ENCODE measurements at regions of chr1 and their contacts with region 1.

Region 1: GRCh38 chr1:157369808-157370521 is 182.3 kb downstream of the FCRL5 start:
- DNase-seq: peak; percentile 80
- H3K4me3 Mint-ChIP-seq: no peak overlapping the region
- H3K27ac Mint-ChIP-seq: no peak overlapping the region
- H3K4me1 Mint-ChIP-seq: peaks cover 4% of the 10 kb centered on the region
- H3K27me3 Mint-ChIP-seq: peaks cover 16% of the 10 kb centered on the region
- CTCF ChIP-seq: peak; percentile 99

Region 2: DNA sequence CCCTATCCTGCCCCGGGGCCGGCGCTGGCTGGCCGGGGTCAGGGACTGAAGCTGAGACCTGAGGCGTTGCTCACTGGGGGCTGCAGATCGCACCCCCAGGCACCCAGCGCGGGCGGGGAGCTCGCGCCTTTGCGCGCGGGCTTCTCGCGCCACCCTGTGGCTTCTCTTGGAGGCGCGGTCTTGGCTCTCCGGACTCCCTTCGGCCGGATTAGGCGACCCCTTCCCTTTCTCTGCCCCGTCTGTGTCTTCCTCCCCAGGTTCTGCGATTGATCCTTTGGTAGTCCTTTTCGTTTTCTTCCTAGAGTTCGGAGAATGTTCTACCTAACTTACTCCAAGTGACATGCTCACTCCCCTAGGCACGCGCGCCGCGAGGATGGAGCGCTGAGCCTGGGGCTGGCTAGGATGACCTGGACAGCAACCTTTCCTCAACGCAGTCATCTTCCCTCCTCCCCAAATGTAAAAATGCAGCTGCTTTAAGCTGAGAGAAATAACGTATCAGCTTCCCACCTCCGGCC is 509.8 kb before region 1 on chr1:
- CTCF ChIA-PET with region 1: no interaction called
- POLR2A ChIA-PET with region 1: no interaction called
- intact Hi-C with region 1: no loop called
- DNase-seq: peak; percentile 60
- H3K4me3 Mint-ChIP-seq: peak overlapping the region; percentile 57
- H3K27ac Mint-ChIP-seq: no peak overlapping the region
- H3K4me1 Mint-ChIP-seq: peaks cover 18% of the 10 kb centered on the region
- H3K27me3 Mint-ChIP-seq: peaks cover 53% of the 10 kb centered on the region
- CTCF ChIP-seq: peak; percentile 98

Region 3: DNA sequence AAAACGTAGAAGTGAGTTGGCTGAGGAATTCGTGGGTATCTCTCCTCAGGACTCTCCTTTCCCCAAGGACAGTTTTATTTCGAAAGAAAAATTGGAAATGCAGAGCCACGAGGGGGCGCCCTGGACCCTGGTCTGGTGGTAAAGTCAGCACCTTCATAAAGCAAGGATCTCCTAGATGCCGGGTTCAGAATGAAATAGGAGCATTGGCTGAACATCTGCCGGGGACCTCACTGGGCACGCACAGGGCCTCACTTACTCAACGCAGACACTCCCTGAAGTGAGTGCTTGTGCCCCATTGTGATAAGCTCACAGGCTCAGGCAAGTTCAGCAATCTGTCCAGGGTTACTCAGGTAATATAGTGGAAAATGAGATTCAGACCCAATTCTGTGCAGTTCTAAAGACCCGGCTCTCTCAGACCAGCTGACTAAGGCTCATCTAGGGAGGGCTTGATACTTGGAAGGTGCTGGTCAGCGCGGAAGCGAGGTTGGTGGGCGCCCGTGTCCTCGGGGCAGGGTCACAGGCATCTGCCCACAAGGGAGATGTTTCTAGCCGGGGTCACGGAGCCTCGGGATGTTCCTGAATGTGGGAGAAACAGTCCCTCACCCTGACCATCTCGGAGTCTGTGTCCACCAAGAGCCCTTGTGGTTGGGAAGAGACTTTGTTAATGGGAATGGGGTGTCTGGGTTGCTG is 176.1 kb before region 1 on chr1:
- CTCF ChIA-PET with region 1: interaction called, 15 read pairs
- POLR2A ChIA-PET with region 1: no interaction called
- intact Hi-C with region 1: loop called (anchors 5 kb)
- DNase-seq: peak; percentile 77
- H3K4me3 Mint-ChIP-seq: no peak overlapping the region
- H3K27ac Mint-ChIP-seq: no peak overlapping the region
- H3K4me1 Mint-ChIP-seq: peaks cover 6% of the 10 kb centered on the region
- H3K27me3 Mint-ChIP-seq: peaks cover 32% of the 10 kb centered on the region
- CTCF ChIP-seq: peak; percentile 83

Region 4: DNA sequence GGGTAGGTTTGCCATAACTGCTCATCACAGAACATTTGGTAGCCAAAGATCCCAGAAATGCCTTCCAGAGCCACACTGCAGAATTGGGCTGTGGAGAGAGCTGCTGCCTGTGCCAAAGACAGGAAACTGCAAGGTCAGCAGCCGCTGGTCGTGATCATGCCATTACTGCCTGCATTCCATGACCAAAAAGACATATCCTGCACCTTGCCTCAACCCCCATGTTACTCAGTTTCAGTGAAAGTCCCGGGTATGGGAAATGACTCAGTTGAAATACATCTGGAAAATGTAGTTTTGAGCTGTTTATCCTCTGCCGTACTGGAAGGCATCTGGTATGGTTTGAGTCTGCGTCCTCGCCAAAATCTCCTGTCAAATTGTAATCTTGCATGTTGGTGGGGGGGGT is 20.7 kb after region 1 on chr1:
- CTCF ChIA-PET with region 1: interaction called, 14 read pairs
- POLR2A ChIA-PET with region 1: no interaction called
- intact Hi-C with region 1: no loop called
- DNase-seq: peak; percentile 73
- H3K4me3 Mint-ChIP-seq: peak overlapping the region; percentile 13
- H3K27ac Mint-ChIP-seq: peak overlapping the region; percentile 36
- H3K4me1 Mint-ChIP-seq: peaks cover 19% of the 10 kb centered on the region
- H3K27me3 Mint-ChIP-seq: no peaks in the 10 kb centered on the region
- CTCF ChIP-seq: no peak

Region 5: DNA sequence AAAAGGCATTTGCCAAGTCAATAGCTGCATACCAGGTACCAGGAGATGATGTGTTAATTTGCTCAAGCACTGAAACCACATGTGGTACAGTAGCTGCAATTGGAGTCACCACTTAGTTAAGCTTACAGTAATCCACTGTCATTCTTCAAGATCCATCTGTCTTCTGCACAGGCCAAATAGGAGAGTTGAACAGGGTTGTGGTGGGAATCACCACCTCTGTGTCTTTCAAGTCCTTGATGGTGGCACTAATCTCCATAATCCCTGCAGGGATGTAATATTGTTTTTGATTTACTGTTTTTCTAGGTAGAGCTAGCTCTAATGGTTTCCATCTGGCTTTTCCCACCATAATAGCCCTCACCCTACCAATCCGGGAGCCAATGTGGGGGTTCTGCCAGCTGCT is 90.4 kb after region 1 on chr1:
- CTCF ChIA-PET with region 1: interaction called, 10 read pairs
- POLR2A ChIA-PET with region 1: no interaction called
- intact Hi-C with region 1: no loop called
- DNase-seq: no peak
- H3K4me3 Mint-ChIP-seq: no peak overlapping the region
- H3K27ac Mint-ChIP-seq: no peak overlapping the region
- H3K4me1 Mint-ChIP-seq: no peaks in the 10 kb centered on the region
- H3K27me3 Mint-ChIP-seq: no peaks in the 10 kb centered on the region
- CTCF ChIP-seq: no peak

Region 6: DNA sequence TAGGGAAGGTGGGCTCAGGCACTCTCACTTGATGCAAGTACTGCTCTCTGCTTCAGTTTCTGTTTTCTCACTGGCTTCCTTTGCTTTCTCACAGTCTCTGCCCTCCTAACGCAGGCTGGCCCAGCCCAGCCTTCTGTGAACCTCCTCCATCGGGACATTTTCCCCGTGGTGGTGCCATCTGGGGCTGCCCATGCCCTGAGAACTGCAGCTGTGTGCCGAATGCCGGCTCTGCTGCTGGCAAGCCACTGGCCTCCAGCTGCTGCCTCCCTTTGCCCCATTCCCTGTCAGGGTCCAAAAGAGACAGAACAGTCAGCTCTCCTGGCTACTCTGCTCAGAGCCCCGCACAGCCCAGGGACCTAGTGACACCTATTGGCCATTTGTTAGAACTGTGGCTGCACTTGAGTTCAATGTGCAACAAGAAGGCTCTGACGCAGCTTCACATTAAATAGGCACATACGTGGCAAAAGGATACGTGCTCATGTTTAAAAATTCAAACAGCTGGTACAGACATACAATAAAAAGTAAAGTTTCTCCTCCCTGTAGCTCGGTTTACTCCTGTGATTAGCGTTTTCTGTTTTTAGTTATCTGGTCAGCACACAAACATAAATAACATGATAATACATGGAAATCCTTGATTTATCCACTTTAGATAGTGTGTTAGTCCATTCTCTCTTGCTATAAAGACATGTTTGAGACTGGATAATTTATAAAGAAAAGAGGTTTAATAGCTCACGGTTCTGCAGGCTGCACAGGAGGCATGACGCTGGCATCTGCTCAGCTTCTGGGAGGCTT is 135.7 kb after region 1 on chr1:
- CTCF ChIA-PET with region 1: interaction called, 20 read pairs
- POLR2A ChIA-PET with region 1: no interaction called
- intact Hi-C with region 1: no loop called
- DNase-seq: peak; percentile 78
- H3K4me3 Mint-ChIP-seq: no peak overlapping the region
- H3K27ac Mint-ChIP-seq: no peak overlapping the region
- H3K4me1 Mint-ChIP-seq: no peaks in the 10 kb centered on the region
- H3K27me3 Mint-ChIP-seq: peaks cover 35% of the 10 kb centered on the region
- CTCF ChIP-seq: peak; percentile 82

Region 7: DNA sequence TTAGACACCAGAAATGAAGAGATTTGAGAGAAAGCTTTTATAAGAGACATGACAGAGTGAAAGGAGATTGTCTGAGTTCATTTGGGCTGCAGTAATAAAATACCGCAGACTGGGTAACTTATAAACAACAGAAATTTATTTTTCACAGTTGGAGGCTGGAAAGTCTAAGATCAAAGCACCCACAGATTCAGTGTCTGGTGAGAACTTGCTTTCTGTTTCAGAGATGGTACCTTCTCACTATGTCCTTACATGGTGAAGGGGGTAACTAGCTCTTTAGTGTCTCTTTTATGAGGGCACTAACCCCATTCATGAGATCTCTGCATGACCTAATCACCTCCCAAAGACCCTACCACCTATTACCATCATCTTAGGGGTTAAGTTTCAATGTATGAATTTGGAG is 258.8 kb after region 1 on chr1:
- CTCF ChIA-PET with region 1: no interaction called
- POLR2A ChIA-PET with region 1: no interaction called
- intact Hi-C with region 1: no loop called
- DNase-seq: no peak
- H3K4me3 Mint-ChIP-seq: no peak overlapping the region
- H3K27ac Mint-ChIP-seq: no peak overlapping the region
- H3K4me1 Mint-ChIP-seq: no peaks in the 10 kb centered on the region
- H3K27me3 Mint-ChIP-seq: peaks cover 87% of the 10 kb centered on the region
- CTCF ChIP-seq: no peak

Region 8: GRCh38 chr1:157878059-157878458 is 508.1 kb after region 1 on chr1:
- CTCF ChIA-PET with region 1: no interaction called
- POLR2A ChIA-PET with region 1: no interaction called
- intact Hi-C with region 1: loop called (anchors 10 kb)
- DNase-seq: peak; percentile 74
- H3K4me3 Mint-ChIP-seq: no peak overlapping the region
- H3K27ac Mint-ChIP-seq: no peak overlapping the region
- H3K4me1 Mint-ChIP-seq: no peaks in the 10 kb centered on the region
- H3K27me3 Mint-ChIP-seq: peaks cover 77% of the 10 kb centered on the region
- CTCF ChIP-seq: peak; percentile 57

Region 9: GRCh38 chr1:157915859-157916258 is 545.9 kb after region 1 on chr1:
- CTCF ChIA-PET with region 1: no interaction called
- POLR2A ChIA-PET with region 1: no interaction called
- intact Hi-C with region 1: no loop called
- DNase-seq: no peak
- H3K4me3 Mint-ChIP-seq: no peak overlapping the region
- H3K27ac Mint-ChIP-seq: no peak overlapping the region
- H3K4me1 Mint-ChIP-seq: no peaks in the 10 kb centered on the region
- H3K27me3 Mint-ChIP-seq: peaks cover 94% of the 10 kb centered on the region
- CTCF ChIP-seq: no peak

Measured in MCF 10A (cell line).